ENCODE measurements at regions of chr10 and their contacts with region 1.

Region 1: GRCh38 chr10:128540781-128541761 is 414.8 kb upstream of the MKI67 start:
- DNase-seq: no peak

Region 2: GRCh38 chr10:128161031-128161430 is 380.0 kb before region 1 on chr10:
- intact Hi-C with region 1: loop called in 1 of 2 experiments (anchors 5 kb)
- DNase-seq: peak; percentile 44

Measured in posterior vena cava (tissue), 2 donors.